Mucosa of descending colon (tissue), 3 donors: ENCODE measurements at regions of chr14 and their contacts with region 1.

Region 1: DNA sequence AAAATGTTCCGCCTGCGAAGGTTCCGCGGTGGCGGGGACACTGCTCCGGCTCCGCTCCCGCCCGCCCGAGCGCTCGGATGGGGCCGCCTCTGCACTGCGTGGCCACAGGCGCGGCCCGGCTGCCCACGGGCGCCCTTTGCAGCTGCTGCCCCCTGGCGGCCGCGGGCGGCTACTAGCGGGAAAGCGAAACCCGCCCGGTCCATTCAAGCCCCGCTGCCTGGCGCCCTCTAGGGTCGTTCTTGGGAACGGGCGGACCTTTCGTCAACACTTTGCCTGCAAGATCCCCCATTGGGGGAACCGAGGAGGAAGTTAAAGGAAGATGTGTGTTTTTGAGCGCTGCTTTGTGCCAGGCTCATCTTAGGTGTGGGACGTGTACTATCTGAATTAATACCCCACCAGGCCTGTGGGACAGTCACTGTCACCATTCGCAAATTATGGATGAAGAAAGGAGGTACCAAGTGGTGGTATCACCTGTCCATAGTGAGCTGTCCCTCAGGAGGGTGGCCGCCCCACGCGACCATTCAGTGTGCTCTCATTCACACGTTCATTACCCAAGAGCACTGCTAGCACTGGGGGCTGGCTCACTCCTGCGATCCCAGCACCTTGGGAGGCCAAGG is 19.4 kb downstream of the GPR132 start:
- DNase-seq: peak; percentile 91 to 95 (median 94)
- ATAC-seq: peak; percentile 96
- H3K4me3 ChIP-seq: no peak overlapping the region
- H3K4me1 ChIP-seq: peaks cover 11% of the 10 kb centered on the region
- CTCF ChIP-seq: peak; percentile 100

Region 2: DNA sequence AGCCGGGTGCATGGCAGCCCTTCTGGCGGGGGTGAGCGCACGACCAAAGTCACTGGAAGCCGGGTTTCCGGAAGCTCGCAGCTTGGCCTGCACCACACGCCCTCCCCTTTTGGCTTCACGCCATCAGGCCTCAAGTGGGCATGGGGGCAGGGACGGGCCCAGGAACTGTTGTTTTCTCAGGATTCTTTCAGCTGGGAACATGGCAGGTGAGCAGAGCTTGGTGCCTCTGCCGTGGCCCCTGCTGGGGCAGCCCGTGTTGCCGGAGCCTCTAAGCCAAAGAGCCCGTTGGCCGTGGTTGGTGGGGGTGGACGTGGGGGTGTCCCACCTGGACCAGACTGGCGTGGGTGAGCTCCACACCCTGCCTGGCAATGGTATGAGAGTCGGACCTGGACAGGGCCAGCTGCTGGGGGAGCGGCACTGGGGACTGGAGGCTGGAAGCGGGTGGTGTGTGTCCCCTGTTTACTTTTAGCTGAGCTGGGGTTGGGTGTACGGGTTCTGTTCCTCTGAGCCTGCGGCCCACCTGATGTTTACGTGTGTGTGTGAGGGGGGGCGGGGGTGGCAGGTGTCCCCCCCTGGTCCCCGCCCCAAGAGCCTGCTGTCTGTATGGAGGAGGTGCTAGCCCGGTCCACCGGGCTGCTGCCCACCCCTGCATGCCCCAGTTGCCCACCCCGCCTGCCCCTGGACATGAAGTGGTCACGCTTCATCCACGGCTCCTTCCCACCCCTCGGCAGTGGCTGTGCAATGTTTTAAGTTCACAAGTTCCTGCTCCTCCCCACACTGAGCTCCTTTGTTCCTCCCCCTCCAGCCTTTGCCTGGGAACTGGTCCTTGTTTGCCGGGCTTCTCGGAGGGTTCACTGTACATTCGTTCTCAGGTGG is 149.8 kb before region 1 on chr14:
- intact Hi-C with region 1: loop called in 1 of 2 experiments (anchors 5 kb)
- DNase-seq: peak in 2 of 3 donors; percentile 35 to 47
- ATAC-seq: peak; percentile 1
- H3K4me3 ChIP-seq: no peak overlapping the region
- H3K4me1 ChIP-seq: no peaks in the 10 kb centered on the region
- CTCF ChIP-seq: no peak

Region 3: DNA sequence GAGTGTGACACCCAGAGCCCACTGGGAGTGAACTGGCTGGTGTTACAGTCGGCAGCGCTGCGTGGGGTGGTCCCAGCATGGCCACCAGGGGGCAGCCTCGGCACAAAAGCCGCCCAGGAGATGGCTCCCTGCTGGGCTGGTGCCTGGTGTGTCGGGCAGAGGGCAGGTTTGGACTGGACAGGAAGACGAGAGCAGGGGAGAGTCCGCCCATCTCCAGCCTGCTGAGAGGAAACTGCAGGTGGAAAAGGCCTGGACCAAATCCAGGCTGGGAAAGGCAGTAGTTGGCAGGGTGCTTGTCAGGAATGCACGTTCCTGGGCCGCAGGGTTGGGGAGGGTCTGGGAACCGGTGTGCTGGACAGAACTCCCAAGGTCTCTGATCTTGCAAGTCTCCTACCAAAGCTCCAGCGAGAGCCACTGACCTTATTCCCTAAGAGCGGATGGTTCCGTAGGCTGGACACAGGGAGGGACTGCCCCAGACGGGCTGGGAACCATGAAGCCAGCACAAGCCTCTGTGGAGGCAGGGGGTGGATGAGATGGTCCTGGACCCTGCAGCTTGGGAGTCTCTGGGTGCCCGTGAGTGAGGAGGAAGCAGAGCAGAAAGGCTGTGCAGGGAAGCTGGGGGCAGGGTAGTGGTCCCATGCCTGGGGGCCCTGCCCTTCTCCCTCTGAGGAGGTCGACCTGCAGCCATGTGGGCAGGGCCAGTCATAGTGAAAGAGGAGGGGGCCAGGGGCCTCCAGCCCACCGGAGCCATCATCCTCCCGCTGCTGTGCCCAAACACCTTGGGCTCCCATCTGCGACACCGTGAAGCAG is 69.4 kb before region 1 on chr14:
- intact Hi-C with region 1: loop called (anchors 10 kb)
- DNase-seq: peak; percentile 90 to 92 (median 91)
- ATAC-seq: peak; percentile 68
- H3K4me3 ChIP-seq: no peak overlapping the region
- H3K4me1 ChIP-seq: peaks cover 53% of the 10 kb centered on the region
- CTCF ChIP-seq: peak; percentile 93